Activated CD8-positive, alpha-beta memory T cell treated with anti-CD3 and anti-CD28 coated beads, Interleukin-2, amount 10 ng/mL, durations not matched to agents 7 days and 5 days (primary cell): ENCODE measurements at regions of chr4 and their contacts with region 1.

Region 1: GRCh38 chr4:77044461-77045150 is 31.2 kb downstream of the CCNI start:
- DNase-seq: no peak
- ATAC-seq: peak; percentile 67
- H3K4me3 Mint-ChIP-seq: no peak overlapping the region
- H3K27ac Mint-ChIP-seq: no peak overlapping the region
- H3K4me1 Mint-ChIP-seq: peaks cover 2% of the 10 kb centered on the region
- H3K27me3 Mint-ChIP-seq: no peaks in the 10 kb centered on the region

Region 2: GRCh38 chr4:76680952-76681351 is 363.7 kb before region 1 on chr4:
- CTCF ChIA-PET with region 1: no interaction called
- DNase-seq: no peak
- ATAC-seq: no peak
- H3K4me3 Mint-ChIP-seq: no peak overlapping the region
- H3K27ac Mint-ChIP-seq: no peak overlapping the region
- H3K4me1 Mint-ChIP-seq: no peaks in the 10 kb centered on the region
- H3K27me3 Mint-ChIP-seq: peaks cover 44% of the 10 kb centered on the region

Region 3: DNA sequence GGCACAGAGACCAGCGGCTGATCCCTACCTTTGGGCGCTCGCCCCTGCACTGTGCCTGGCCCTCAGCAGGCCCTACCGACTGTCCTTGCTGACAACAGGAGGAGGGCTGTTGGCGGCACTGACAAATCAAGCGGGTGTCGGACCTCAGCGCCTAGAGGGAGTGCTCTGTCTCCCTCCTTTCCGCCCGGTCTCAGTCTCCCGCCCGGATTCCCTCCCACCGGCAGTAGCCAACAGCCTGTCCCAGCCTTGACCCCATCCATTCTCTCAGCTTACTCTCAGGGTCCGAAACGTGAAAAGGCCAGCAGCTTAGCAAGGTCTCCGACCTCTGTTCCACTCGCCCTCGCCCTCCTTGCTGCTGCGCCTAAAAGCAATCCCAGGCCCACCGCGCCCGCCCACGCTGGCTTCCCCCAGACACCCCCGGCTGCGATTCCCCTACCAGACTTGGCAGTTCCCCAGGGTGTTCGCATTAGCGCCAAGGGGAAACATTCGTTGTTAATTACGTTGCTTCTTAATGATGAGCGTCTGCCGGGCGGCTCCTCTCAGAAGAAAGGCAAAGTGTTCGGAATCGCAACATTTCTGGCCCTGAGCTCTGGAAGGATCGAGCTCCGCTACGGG is 242.9 kb before region 1 on chr4:
- CTCF ChIA-PET with region 1: no interaction called
- DNase-seq: no peak
- ATAC-seq: no peak
- H3K4me3 Mint-ChIP-seq: no peak overlapping the region
- H3K27ac Mint-ChIP-seq: no peak overlapping the region
- H3K4me1 Mint-ChIP-seq: no peaks in the 10 kb centered on the region
- H3K27me3 Mint-ChIP-seq: peaks cover 24% of the 10 kb centered on the region

Region 4: GRCh38 chr4:77020017-77020416 is 24.6 kb before region 1 on chr4:
- CTCF ChIA-PET with region 1: interaction called, 10 read pairs
- DNase-seq: no peak
- ATAC-seq: no peak
- H3K4me3 Mint-ChIP-seq: no peak overlapping the region
- H3K27ac Mint-ChIP-seq: no peak overlapping the region
- H3K4me1 Mint-ChIP-seq: peaks cover 3% of the 10 kb centered on the region
- H3K27me3 Mint-ChIP-seq: peaks cover 3% of the 10 kb centered on the region

Region 5: DNA sequence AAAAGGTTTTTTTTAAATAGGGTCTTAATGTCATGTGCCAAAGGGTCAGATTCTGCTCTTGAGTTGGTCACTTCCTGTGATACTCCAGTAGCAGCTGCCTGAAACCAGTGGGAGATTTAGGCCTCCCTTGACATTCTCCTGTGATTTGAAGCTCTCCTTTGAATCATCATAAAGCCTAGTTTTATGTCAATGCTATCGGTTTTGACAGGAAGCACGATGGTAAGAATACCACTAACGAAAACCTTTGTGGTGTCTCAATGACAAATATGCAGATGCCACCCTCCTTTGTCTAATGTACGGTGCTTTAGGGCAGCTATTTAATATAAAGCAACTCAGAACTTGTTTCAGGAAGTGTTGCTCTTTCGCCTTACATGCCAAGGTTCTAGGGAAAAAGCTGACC is 13.1 kb before region 1 on chr4:
- CTCF ChIA-PET with region 1: interaction called, 21 read pairs
- DNase-seq: peak; percentile 61
- ATAC-seq: peak; percentile 80
- H3K4me3 Mint-ChIP-seq: no peak overlapping the region
- H3K27ac Mint-ChIP-seq: peak overlapping the region; percentile 55
- H3K4me1 Mint-ChIP-seq: peaks cover 44% of the 10 kb centered on the region
- H3K27me3 Mint-ChIP-seq: peaks cover 4% of the 10 kb centered on the region

Region 6: DNA sequence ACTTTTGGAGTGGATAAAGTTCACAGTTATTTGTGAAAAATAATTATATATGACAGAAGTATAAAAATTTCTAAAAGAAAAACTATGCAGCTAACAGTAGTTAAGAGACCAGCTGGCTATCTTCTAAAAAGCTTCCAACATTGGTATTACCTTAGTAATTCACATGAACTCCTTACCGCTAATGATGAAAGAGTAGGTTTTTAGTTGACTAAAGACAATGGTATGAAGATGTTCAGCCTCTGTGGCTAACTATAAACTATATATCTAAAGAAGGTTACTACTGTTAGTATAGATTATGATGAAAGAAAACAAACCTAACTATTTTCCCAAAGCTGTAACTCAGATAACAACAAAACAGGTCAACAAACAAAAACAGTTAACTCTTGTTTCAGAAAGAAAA is 20.8 kb after region 1 on chr4:
- CTCF ChIA-PET with region 1: interaction called, 10 read pairs
- DNase-seq: no peak
- ATAC-seq: no peak
- H3K4me3 Mint-ChIP-seq: no peak overlapping the region
- H3K27ac Mint-ChIP-seq: no peak overlapping the region
- H3K4me1 Mint-ChIP-seq: peaks cover 19% of the 10 kb centered on the region
- H3K27me3 Mint-ChIP-seq: no peaks in the 10 kb centered on the region